ENCODE measurements at regions of chr5 and their contacts with region 1.

Region 1: GRCh38 chr5:30112857-30113256 is 1080.6 kb upstream of the CDH6 start:
- DNase-seq: no peak
- H3K4me3 ChIP-seq: no peak overlapping the region
- H3K27ac ChIP-seq: no peak overlapping the region
- H3K4me1 ChIP-seq: no peaks in the 10 kb centered on the region
- H3K27me3 ChIP-seq: no peaks in the 10 kb centered on the region
- CTCF ChIP-seq: no peak

Region 2: DNA sequence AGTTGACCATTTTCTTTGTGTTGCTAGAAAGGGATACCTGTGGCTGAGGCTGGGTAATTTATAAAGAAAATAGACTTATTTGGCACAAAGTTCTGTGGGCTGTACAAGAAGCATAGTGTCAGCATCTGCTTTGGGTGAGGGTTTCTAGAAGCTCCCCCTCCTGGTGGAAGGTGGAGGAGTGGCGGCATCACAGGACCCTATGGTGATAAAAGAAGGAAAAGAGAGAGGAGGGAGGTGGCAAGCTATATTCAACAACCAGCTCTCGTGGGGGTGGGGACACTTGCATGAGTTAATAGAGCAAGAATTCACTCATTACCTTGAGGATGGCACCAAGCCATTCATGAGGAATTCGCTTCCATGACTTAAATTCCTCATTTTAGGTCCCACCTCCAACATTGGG is 1033.1 kb before region 1 on chr5:
- CTCF ChIA-PET with region 1: interaction called, 18 read pairs
- POLR2A ChIA-PET with region 1: no interaction called
- intact Hi-C with region 1: no loop called
- DNase-seq: no peak
- H3K4me3 ChIP-seq: no peak overlapping the region
- H3K27ac ChIP-seq: no peak overlapping the region
- H3K4me1 ChIP-seq: no peaks in the 10 kb centered on the region
- H3K27me3 ChIP-seq: no peaks in the 10 kb centered on the region
- CTCF ChIP-seq: 0 out of 2 replicates have a peak, but pooled peaks have one; percentile 22

Region 3: GRCh38 chr5:29942089-29942488 is 170.8 kb before region 1 on chr5:
- CTCF ChIA-PET with region 1: no interaction called
- POLR2A ChIA-PET with region 1: no interaction called
- intact Hi-C with region 1: no loop called
- DNase-seq: no peak
- H3K4me3 ChIP-seq: no peak overlapping the region
- H3K27ac ChIP-seq: no peak overlapping the region
- H3K4me1 ChIP-seq: no peaks in the 10 kb centered on the region
- H3K27me3 ChIP-seq: no peaks in the 10 kb centered on the region
- CTCF ChIP-seq: no peak

Region 4: GRCh38 chr5:30063503-30063902 is 49.4 kb before region 1 on chr5:
- CTCF ChIA-PET with region 1: no interaction called
- POLR2A ChIA-PET with region 1: no interaction called
- intact Hi-C with region 1: no loop called
- DNase-seq: no peak
- H3K4me3 ChIP-seq: no peak overlapping the region
- H3K27ac ChIP-seq: no peak overlapping the region
- H3K4me1 ChIP-seq: no peaks in the 10 kb centered on the region
- H3K27me3 ChIP-seq: no peaks in the 10 kb centered on the region
- CTCF ChIP-seq: no peak

Region 5: DNA sequence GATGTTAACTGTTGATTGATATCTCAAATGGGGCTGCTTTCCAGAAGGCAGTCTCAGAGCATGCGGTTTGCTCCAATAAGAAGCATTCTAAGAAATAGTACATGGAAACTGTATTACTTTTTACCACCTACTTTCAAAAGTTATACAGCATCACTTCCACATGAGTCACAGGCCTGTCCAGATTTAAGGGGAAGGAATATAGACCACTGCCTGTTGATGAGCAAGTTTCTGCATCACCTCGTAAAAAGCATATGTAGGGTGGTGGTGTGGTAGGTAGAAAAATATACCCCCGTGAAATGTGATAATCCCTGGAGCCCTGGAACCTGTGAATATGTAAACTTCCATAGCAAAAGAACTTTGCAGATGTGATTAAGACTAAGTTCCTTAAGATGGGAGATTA is 264.0 kb after region 1 on chr5:
- CTCF ChIA-PET with region 1: no interaction called
- POLR2A ChIA-PET with region 1: no interaction called
- intact Hi-C with region 1: no loop called
- DNase-seq: no peak
- H3K4me3 ChIP-seq: no peak overlapping the region
- H3K27ac ChIP-seq: no peak overlapping the region
- H3K4me1 ChIP-seq: no peaks in the 10 kb centered on the region
- H3K27me3 ChIP-seq: no peaks in the 10 kb centered on the region
- CTCF ChIP-seq: no peak